ENCODE measurements at regions of chrX and their contacts with region 1.

Region 1: DNA sequence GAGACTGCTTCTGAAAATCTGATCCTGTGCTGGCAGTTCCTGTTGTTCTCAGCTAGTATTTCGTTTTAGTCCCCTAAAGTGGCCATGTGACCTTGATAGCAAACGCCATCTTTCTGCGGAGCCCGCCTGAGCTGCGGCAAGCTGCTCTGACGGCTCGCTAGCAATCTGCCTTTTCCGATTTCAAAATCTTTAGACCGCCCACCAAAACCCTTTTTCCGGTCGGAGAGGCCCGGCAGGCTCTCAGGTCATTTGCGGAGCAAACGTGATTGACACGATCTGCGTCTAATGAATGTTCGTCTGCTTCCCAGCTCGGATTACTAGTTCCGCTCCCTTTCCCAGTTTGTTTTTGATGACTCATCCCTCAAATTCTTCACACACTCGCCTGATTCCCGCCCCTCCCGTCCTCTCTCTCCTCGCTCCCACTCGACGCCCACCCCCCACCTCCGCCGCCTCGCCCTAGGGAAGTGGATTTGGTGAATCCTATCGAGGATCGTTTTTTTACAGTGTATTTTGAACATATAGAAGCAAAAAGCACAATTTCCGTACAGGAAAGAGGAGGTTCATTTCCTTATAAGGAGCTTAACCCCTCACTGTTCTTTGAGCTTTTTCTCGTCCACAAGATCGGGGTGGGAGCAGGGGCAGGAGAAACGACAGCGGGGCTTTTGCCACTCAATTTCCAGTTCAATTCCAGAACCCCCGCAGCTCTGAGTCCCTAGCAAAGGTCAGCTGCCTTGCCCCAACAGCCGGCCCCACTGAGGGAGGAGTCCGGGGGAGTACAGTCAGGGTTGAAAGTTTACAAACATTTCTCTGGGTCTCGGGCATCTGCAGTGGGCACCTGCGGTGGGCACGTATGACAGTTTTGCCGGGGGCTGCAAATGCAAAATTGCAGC is 37.5 kb downstream of the NLGN3 start:
- DNase-seq: peak; percentile 44
- ATAC-seq: peak; percentile 90
- H3K4me3 Mint-ChIP-seq: peak overlapping the region; percentile 93
- H3K27ac Mint-ChIP-seq: peak overlapping the region; percentile 99
- H3K4me1 Mint-ChIP-seq: peaks cover 16% of the 10 kb centered on the region
- H3K27me3 Mint-ChIP-seq: no peaks in the 10 kb centered on the region
- CTCF ChIP-seq: no peak

Region 2: GRCh38 chrX:70133303-70134115 is 1048.6 kb before region 1 on chrX and contains the start of gene IGBP1:
- CTCF ChIA-PET with region 1: no interaction called
- POLR2A ChIA-PET with region 1: no interaction called
- intact Hi-C with region 1: loop called (anchors 1 kb)
- DNase-seq: peak; percentile 57
- ATAC-seq: peak; percentile 82
- H3K4me3 Mint-ChIP-seq: peak within 1 kb of the TSS; percentile 99
- H3K27ac Mint-ChIP-seq: peak within 1 kb of the TSS; percentile 96
- H3K4me1 Mint-ChIP-seq: peaks cover 29% of the 10 kb centered on the region
- H3K27me3 Mint-ChIP-seq: no peaks in the 10 kb centered on the region
- CTCF ChIP-seq: no peak
- total RNA-seq, gene IGBP1: 51.6 and 52.7 TPM in 2 replicates

Region 3: DNA sequence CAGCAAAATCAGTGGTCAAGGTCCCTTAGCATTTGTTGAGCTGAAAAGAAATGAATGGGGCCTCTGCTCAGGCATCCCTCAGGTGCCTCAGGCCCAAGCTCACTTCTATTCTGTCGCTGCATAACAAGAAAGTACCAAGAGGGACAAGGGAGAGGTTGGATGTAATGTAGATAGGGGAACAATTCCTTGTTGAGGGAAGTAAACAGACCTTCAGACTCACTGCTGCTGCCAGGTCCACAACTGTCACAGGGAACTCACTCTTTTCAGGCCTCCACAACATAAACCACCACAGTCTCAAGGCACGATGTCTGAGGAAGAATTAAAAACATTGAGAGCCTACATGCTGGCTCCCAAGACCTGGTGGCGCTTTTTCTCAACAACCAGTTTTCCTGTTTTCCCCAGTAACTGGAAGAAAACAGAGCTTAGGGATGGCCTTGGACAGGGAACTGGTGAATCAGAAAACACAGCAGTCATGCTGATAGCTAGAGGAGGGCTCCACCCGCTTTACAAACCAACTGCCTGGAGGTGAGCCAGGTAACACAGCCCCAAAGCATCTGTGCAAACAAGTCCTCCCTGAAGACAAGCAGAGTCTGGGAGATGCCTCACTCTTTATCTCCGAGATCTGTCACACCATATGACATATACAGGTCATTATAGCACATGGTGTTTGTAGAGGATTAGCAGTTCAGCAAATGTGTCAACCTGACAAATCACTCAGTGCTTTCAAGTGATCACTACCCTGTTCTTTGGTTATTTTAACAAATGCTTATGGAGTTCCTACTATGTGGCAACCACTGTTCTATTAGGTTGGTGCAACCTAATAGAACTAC is 962.0 kb before region 1 on chrX:
- CTCF ChIA-PET with region 1: no interaction called
- POLR2A ChIA-PET with region 1: no interaction called
- intact Hi-C with region 1: no loop called
- DNase-seq: no peak
- ATAC-seq: no peak
- H3K4me3 Mint-ChIP-seq: no peak overlapping the region
- H3K27ac Mint-ChIP-seq: no peak overlapping the region
- H3K4me1 Mint-ChIP-seq: no peaks in the 10 kb centered on the region
- H3K27me3 Mint-ChIP-seq: no peaks in the 10 kb centered on the region
- CTCF ChIP-seq: no peak

Region 4: GRCh38 chrX:70769659-70770232 is 412.4 kb before region 1 on chrX:
- CTCF ChIA-PET with region 1: interaction called, 6 read pairs
- POLR2A ChIA-PET with region 1: no interaction called
- intact Hi-C with region 1: loop called (anchors 1 kb)
- DNase-seq: no peak
- ATAC-seq: no peak
- H3K4me3 Mint-ChIP-seq: no peak overlapping the region
- H3K27ac Mint-ChIP-seq: no peak overlapping the region
- H3K4me1 Mint-ChIP-seq: no peaks in the 10 kb centered on the region
- H3K27me3 Mint-ChIP-seq: no peaks in the 10 kb centered on the region
- CTCF ChIP-seq: no peak

Region 5: DNA sequence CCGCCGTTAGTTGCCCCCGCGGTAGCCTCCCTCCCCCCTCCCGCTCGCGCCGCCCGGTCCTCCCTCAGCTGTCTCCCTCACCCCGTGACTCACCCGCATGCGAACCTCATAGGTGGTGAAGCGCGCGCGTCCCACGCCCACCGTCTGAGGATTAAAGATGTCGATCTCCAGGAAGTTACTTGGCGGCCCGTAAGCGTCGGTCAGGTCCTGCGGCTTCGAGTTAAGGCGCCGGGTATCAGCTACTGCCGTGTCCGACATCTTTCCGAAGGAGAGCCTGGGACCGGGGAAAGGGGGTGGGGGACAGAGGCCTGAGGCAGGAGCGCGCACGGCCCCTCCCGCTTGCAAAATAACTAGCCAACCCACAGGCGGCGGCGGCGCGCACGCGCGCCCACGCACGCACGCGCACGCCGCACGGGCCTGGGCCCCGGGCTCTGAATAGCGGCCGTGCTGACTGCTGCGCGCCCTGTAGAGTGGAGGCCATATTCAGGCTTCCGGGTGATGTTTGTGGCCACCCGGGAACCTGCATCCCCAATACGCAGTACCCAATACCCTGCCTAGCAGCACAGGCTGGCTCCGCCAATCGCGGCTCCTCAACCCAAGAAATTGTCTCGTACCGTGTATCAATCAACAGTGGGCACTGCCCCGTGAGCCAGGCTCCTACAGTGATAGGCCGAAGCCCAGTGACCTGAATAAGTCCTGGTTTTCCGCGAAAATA is 113.9 kb before region 1 on chrX and contains the start of gene SNX12:
- CTCF ChIA-PET with region 1: no interaction called
- POLR2A ChIA-PET with region 1: interaction called, 6 read pairs
- intact Hi-C with region 1: loop called (anchors 1 kb)
- DNase-seq: peak; percentile 79
- ATAC-seq: peak; percentile 94
- H3K4me3 Mint-ChIP-seq: peak within 1 kb of the TSS; percentile 94
- H3K27ac Mint-ChIP-seq: peak within 1 kb of the TSS; percentile 95
- H3K4me1 Mint-ChIP-seq: peaks cover 19% of the 10 kb centered on the region
- H3K27me3 Mint-ChIP-seq: peaks cover 3% of the 10 kb centered on the region
- CTCF ChIP-seq: no peak
- total RNA-seq, gene SNX12: 43.2 and 44.8 TPM in 2 replicates

Region 6: DNA sequence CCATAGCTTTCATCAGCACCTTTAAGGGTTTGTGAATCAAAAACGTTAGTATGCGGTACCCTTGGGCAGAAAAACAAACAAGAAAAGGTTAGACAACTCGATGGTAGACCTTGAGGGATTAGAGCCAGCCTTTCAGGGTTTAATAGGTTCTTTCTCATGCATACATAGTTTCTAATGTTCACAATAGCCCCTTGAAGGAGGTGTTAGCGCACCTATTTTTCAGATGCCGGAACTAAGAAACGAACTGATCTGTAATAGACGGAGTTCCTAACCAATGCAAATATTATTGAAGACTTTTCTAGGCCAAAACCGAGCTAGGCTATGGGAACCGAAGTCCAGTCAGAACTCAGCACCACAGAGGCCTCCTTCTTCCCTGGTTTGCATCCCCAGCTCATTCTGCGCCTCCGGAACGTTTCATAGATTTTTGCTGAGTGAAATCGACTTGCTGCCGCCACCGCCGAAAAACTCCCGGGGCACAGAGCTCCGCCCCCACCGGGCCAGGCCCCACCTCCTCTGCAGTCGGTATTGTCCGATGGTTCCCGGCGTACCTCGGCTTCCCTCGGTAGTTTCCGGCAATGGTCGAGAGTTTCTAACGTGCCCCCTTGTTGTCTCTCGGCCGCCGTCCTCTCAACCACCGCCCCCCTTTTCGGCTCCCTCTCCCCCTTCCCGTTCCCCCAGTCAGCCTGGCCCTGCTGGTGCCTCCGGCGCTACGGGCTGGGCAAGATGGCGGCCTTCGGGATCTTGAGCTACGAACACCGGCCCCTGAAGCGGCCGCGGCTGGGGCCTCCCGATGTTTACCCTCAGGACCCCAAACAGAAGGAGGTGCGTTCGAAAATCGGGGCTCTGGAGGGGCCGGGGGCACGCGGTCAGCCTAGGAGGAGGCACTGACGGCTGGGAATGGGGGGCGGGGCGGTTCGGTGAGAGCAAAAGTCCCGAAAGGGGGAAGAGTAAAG is 63.8 kb before region 1 on chrX and contains the start of gene MED12:
- CTCF ChIA-PET with region 1: no interaction called
- POLR2A ChIA-PET with region 1: interaction called, 18 read pairs
- intact Hi-C with region 1: loop called (anchors 5 kb)
- DNase-seq: peak; percentile 76
- ATAC-seq: peak; percentile 96
- H3K4me3 Mint-ChIP-seq: peak within 1 kb of the TSS; percentile 85
- H3K27ac Mint-ChIP-seq: peak within 1 kb of the TSS; percentile 89
- H3K4me1 Mint-ChIP-seq: peaks cover 16% of the 10 kb centered on the region
- H3K27me3 Mint-ChIP-seq: no peaks in the 10 kb centered on the region
- CTCF ChIP-seq: no peak
- total RNA-seq, gene MED12: 81.7 and 102 TPM in 2 replicates

Region 7: DNA sequence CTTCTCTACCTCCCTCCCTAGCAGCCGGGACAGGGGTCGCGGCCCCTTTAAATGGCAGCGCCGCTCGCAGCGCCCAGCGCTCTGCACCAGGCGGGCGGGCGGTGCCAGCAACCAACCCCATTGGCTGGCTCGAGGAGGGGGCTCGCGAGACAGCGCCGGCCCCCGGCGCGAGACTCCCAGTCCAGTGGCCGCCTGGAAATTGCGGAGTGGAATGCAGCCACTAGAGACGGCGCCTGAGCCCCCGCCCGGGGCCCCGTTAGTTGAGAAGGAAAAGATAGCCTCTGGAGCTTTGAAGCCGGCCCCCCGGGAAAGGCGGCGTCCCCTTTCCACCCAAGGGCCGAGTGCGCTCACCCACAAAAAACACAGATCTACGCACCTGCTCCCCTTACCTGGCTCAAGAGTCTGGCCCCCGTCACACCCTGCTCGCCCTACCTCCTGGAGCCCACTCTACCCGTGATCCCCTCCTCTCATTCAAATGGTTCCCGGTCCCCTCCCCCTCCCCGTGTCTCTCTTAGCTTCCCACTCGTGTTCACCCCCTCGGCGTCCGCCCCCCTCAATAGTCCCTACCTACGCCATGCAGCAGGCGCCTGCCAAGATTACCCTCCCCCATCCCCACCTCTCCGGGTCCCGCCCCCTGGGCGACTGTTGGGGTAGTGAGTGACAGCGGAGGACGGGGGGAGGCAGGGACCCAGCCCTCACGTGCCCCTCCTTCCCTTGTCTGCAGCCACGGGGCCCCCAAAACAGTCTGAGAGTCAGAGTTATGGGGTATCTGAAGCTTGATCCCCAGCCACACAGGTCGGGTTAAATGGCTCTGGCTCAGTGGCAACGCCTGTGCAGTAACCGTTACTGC is 72.2 kb after region 1 on chrX and contains the start of gene ZMYM3:
- CTCF ChIA-PET with region 1: no interaction called
- POLR2A ChIA-PET with region 1: interaction called, 24 read pairs
- intact Hi-C with region 1: loop called (anchors 1 kb)
- DNase-seq: peak; percentile 64
- ATAC-seq: peak; percentile 85
- H3K4me3 Mint-ChIP-seq: peak within 1 kb of the TSS; percentile 93
- H3K27ac Mint-ChIP-seq: peak within 1 kb of the TSS; percentile 87
- H3K4me1 Mint-ChIP-seq: peaks cover 21% of the 10 kb centered on the region
- H3K27me3 Mint-ChIP-seq: no peaks in the 10 kb centered on the region
- CTCF ChIP-seq: no peak
- total RNA-seq, gene ZMYM3: 27.9 and 28.2 TPM in 2 replicates